BJ (cell line): ENCODE measurements at regions of chr11 and their contacts with region 1.

Region 1: GRCh38 chr11:3412837-3413236 is 33.9 kb upstream of the ZNF195 start:
- DNase-seq: no peak
- H3K4me3 ChIP-seq: no peak overlapping the region
- H3K27me3 ChIP-seq: no peaks in the 10 kb centered on the region
- CTCF ChIP-seq: no peak

Region 2: GRCh38 chr11:2930704-2931428 is 482.0 kb before region 1 on chr11:
- CTCF ChIA-PET with region 1: no interaction called
- POLR2A ChIA-PET with region 1: no interaction called
- DNase-seq: no peak
- H3K4me3 ChIP-seq: peak overlapping the region; percentile 90
- H3K27me3 ChIP-seq: no peaks in the 10 kb centered on the region
- CTCF ChIP-seq: peak; percentile 38

Region 3: GRCh38 chr11:3341298-3341697 is 71.5 kb before region 1 on chr11:
- CTCF ChIA-PET with region 1: interaction called, 47 read pairs
- POLR2A ChIA-PET with region 1: no interaction called
- DNase-seq: no peak
- H3K4me3 ChIP-seq: no peak overlapping the region
- H3K27me3 ChIP-seq: no peaks in the 10 kb centered on the region
- CTCF ChIP-seq: peak; percentile 55